ENCODE measurements at regions of chr3 and their contacts with region 1.

Region 1: GRCh38 chr3:32947789-32948238 is 3.6 kb upstream of the CCR4 start:
- DNase-seq: peak; percentile 99
- H3K4me3 Mint-ChIP-seq: no peak overlapping the region
- H3K27ac Mint-ChIP-seq: no peak overlapping the region
- H3K4me1 Mint-ChIP-seq: peaks cover 38% of the 10 kb centered on the region
- H3K27me3 Mint-ChIP-seq: no peaks in the 10 kb centered on the region

Region 2: GRCh38 chr3:32703491-32703972 is 244.3 kb before region 1 on chr3:
- CTCF ChIA-PET with region 1: no interaction called
- intact Hi-C with region 1: no loop called
- DNase-seq: no peak
- H3K4me3 Mint-ChIP-seq: no peak overlapping the region
- H3K27ac Mint-ChIP-seq: no peak overlapping the region
- H3K4me1 Mint-ChIP-seq: peaks cover 27% of the 10 kb centered on the region
- H3K27me3 Mint-ChIP-seq: no peaks in the 10 kb centered on the region

Region 3: DNA sequence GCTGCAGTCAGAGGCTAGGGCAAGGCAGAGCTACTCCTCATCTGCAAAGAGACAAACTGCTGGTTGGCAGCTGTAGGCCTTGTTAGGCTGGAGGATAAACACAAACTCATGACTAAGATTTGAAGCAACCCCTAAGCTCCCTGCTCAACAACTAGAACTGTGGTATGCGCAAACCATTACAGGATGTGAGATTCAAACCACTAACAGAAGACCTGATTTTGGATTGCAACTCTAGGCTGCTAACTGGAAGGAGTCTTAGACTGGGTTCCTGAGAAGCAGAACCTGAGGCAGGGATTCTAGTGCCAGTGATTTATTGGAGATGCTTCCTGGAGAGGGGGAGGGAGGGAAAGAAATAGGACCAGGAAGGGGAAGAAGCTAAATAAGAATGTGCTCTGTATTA is 26.2 kb after region 1 on chr3:
- CTCF ChIA-PET with region 1: interaction called, 3 read pairs
- intact Hi-C with region 1: loop called (anchors 1 kb)
- DNase-seq: peak; percentile 49
- H3K4me3 Mint-ChIP-seq: no peak overlapping the region
- H3K27ac Mint-ChIP-seq: no peak overlapping the region
- H3K4me1 Mint-ChIP-seq: peaks cover 10% of the 10 kb centered on the region
- H3K27me3 Mint-ChIP-seq: no peaks in the 10 kb centered on the region

Region 4: DNA sequence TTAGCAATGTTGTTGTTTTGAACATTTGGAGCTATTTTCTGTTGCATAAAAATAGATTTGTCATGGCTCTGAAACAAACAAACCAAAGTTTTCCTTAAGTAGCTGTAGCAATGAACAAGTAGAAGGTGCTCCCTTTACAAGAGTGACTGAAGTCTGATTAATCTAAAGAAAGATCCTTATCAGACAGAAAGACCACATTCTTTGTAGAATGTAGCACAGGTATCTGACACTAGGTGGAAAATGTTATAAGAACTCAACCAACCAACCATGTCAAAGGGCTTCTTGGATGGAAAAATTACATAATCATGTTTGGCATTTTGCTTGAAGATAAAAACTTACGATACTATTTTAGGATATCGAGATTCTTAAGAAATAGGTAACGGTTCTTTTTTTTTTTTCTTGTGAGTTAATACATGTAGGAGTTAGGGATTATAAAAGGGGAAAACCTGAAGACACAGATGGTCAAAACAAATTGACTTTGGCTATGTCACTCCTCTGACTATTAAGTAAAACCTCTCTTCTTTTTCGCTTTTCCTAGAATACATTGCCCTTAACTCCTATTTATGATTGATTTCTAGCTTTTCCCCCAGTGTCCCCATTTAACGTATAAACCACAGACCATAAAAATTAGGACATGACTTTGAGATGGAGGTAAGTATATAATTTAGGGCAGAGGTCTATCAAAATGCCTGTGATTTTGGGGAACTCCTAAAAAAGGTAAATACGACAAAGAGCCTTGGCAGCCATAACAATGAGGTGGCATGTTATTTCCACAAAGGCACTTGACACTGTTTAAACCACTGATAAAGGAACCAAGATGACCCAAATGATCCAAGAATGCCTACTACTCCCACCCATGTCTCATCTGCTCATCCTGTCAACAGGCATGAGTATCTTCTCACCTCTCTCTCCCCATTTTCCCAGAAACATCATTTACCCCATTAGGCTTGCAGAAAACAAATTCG is 75.6 kb after region 1 on chr3:
- CTCF ChIA-PET with region 1: interaction called, 6 read pairs
- intact Hi-C with region 1: loop called (anchors 1 kb)
- DNase-seq: no peak
- H3K4me3 Mint-ChIP-seq: peak overlapping the region; percentile 32
- H3K27ac Mint-ChIP-seq: peak overlapping the region; percentile 81
- H3K4me1 Mint-ChIP-seq: peaks cover 46% of the 10 kb centered on the region
- H3K27me3 Mint-ChIP-seq: no peaks in the 10 kb centered on the region

Region 5: GRCh38 chr3:33074217-33075067 is 126.6 kb after region 1 on chr3:
- CTCF ChIA-PET with region 1: interaction called, 254 read pairs
- intact Hi-C with region 1: loop called (anchors 1 kb)
- DNase-seq: peak; percentile 84
- H3K4me3 Mint-ChIP-seq: no peak overlapping the region
- H3K27ac Mint-ChIP-seq: no peak overlapping the region
- H3K4me1 Mint-ChIP-seq: peaks cover 11% of the 10 kb centered on the region
- H3K27me3 Mint-ChIP-seq: no peaks in the 10 kb centered on the region

Region 6: DNA sequence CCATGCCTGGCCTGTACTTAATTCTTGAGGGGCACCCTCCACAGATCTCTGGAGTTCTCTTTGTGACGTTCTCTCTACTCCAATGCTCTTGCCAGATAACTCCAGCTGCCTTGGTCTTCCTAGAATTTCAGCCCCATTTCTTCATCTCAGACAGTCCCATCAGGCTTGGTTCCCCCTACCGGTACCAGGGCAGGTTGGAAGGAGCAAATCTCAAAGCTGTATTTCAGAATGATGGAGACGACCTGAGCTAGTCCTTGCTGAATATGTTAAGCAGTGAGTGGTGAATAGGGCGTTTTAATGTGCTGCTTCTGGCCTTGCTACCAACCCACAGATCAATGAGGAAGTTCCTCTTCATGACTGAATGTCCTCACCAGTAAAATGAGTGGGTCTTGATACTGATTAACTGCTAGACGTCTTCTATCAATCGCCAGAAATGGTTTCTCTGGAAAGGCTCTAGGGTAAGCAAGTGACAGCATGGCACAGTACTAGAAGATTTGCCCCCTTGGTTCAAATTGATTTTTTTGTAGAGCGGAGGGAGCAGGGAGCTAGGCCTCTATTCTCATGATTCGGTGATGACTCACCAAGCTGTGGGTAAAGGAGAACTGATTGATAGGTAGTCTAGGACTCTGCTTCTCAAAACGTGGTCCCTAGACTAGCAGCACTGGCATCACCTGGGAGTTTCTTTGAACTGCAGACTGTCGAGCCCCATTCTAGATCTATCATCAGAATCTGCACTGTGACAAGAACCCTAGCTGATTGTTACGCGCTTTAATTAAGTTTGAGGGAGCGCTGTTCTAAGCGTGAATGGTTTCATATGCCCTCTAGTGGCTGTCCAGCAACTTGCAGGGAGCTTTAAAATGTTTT is 424.6 kb after region 1 on chr3:
- CTCF ChIA-PET with region 1: interaction called, 24 read pairs
- intact Hi-C with region 1: loop called (anchors 1 kb)
- DNase-seq: peak; percentile 62
- H3K4me3 Mint-ChIP-seq: no peak overlapping the region
- H3K27ac Mint-ChIP-seq: no peak overlapping the region
- H3K4me1 Mint-ChIP-seq: peaks cover 5% of the 10 kb centered on the region
- H3K27me3 Mint-ChIP-seq: peaks cover 11% of the 10 kb centered on the region